Naive thymus-derived CD4-positive, alpha-beta T cell (primary cell): ENCODE measurements at regions of chr3 and their contacts with region 1.

Region 1: GRCh38 chr3:16808393-16809107 is 76.2 kb upstream of the PLCL2 start:
- DNase-seq: peak in 2 of 9 donors; percentile 8 to 16
- ATAC-seq: no peak
- H3K4me3 ChIP-seq: no peak overlapping the region
- H3K4me3 Mint-ChIP-seq: no peak overlapping the region
- H3K27ac ChIP-seq: no peak overlapping the region
- H3K27ac Mint-ChIP-seq: no peak overlapping the region
- H3K4me1 ChIP-seq: peaks cover 13 to 14% of the 10 kb centered on the region in 2 donors
- H3K4me1 Mint-ChIP-seq: peaks cover 8 to 36% (median 25%) of the 10 kb centered on the region in 7 donors
- H3K27me3 ChIP-seq: no peaks in the 10 kb centered on the region
- H3K27me3 Mint-ChIP-seq: peaks cover 0 to 43% (median 0%) of the 10 kb centered on the region in 5 donors

Region 2: DNA sequence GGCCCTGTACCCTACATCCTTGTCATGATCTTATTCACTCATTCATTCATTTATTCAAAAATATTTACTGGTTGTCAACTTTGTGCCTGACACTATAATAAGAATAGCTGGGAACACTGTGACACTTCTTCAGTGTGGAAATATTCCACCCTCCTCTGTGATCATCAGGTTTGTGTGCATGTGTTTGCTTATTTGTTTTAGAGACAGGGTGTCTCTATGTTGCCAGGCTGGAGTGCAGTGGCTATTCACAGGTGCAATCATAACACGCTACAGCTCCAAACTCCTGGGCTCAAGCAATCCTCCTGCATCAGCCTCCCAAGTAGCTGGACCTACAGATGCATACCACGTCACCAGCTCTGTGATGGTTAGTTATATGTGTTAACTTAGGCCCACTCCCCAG is 26.2 kb after region 1 on chr3:
- CTCF ChIA-PET with region 1: no interaction called
- POLR2A ChIA-PET with region 1: no interaction called
- intact Hi-C with region 1: no loop called
- DNase-seq: no peak
- ATAC-seq: no peak
- H3K4me3 ChIP-seq: no peak overlapping the region
- H3K4me3 Mint-ChIP-seq: no peak overlapping the region
- H3K27ac ChIP-seq: no peak overlapping the region
- H3K27ac Mint-ChIP-seq: peak overlapping the region in 2 of 9 donors; percentile 2 to 12
- H3K4me1 ChIP-seq: peaks cover 0 to 12% of the 10 kb centered on the region in 2 donors
- H3K4me1 Mint-ChIP-seq: peaks cover 10 to 41% (median 33%) of the 10 kb centered on the region in 7 donors
- H3K27me3 ChIP-seq: no peaks in the 10 kb centered on the region
- H3K27me3 Mint-ChIP-seq: peaks cover 0 to 2% (median 0%) of the 10 kb centered on the region in 5 donors

Region 3: DNA sequence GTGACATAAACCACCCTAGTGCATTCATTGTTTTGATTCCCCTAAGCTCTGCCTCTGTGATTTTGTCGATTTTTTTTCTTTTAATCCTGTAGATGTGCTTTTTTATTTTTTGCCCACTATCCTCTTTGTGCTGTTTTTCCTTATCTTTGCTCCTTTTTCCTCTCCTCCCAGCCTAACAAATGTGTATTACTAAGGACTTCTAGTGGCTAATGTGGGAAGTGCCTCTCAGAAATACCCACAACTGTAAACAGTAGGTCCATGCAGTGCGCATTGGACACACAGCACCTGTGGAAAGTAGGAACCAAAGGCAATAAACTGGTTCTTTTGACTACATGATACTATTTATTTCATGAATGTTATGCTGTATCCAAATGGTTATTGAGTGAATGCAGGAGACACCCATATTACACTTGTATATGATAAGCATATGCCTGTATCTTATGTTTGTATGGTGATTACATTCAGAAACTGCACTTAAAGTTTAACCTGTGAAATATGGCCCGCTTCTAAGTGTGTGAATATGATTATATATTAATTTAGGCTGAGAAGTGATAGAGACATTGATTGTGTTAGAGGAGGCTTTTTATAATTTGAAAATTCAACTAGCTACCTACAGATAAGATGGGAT is 224.0 kb after region 1 on chr3:
- CTCF ChIA-PET with region 1: interaction called, 3 read pairs
- POLR2A ChIA-PET with region 1: no interaction called
- intact Hi-C with region 1: loop called in 1 of 2 experiments (anchors 5 kb)
- DNase-seq: no peak
- ATAC-seq: no peak
- H3K4me3 ChIP-seq: no peak overlapping the region
- H3K4me3 Mint-ChIP-seq: peak overlapping the region in 1 of 10 donors; percentile 11
- H3K27ac ChIP-seq: no peak overlapping the region
- H3K27ac Mint-ChIP-seq: peak overlapping the region in 7 of 9 donors; percentile 4 to 60 (median 17)
- H3K4me1 ChIP-seq: peaks cover 0 to 24% of the 10 kb centered on the region in 2 donors
- H3K4me1 Mint-ChIP-seq: peaks cover 48 to 90% (median 80%) of the 10 kb centered on the region in 7 donors
- H3K27me3 ChIP-seq: no peaks in the 10 kb centered on the region
- H3K27me3 Mint-ChIP-seq: no peaks in the 10 kb centered on the region

Region 4: DNA sequence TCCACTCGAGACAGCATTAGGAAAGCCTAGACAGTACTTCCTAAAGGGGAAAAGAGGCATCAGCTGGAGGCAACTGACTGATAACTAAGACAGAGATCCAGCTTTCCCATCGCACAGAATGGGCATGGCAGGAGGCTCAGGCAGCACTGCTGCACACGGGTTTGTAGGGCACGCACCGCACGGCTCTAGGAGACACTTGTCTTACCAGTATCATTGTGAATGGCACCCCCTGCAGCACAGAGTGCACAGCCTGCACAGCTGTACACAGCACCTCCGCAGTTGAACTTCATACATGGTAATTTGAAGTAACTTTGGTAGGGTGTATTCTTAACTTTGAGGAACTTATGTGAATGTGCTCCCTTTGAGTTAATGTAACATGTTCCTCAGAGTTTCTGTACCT is 357.8 kb after region 1 on chr3:
- CTCF ChIA-PET with region 1: no interaction called
- POLR2A ChIA-PET with region 1: no interaction called
- intact Hi-C with region 1: loop called in 1 of 2 experiments (anchors 5 kb)
- DNase-seq: peak in 4 of 9 donors; percentile 7 to 22 (median 14)
- ATAC-seq: no peak
- H3K4me3 ChIP-seq: no peak overlapping the region
- H3K4me3 Mint-ChIP-seq: no peak overlapping the region
- H3K27ac ChIP-seq: no peak overlapping the region
- H3K27ac Mint-ChIP-seq: peak overlapping the region in 2 of 9 donors; percentile 41 to 65
- H3K4me1 ChIP-seq: no peaks in the 10 kb centered on the region
- H3K4me1 Mint-ChIP-seq: peaks cover 0 to 15% (median 0%) of the 10 kb centered on the region in 7 donors
- H3K27me3 ChIP-seq: no peaks in the 10 kb centered on the region
- H3K27me3 Mint-ChIP-seq: no peaks in the 10 kb centered on the region

Region 5: DNA sequence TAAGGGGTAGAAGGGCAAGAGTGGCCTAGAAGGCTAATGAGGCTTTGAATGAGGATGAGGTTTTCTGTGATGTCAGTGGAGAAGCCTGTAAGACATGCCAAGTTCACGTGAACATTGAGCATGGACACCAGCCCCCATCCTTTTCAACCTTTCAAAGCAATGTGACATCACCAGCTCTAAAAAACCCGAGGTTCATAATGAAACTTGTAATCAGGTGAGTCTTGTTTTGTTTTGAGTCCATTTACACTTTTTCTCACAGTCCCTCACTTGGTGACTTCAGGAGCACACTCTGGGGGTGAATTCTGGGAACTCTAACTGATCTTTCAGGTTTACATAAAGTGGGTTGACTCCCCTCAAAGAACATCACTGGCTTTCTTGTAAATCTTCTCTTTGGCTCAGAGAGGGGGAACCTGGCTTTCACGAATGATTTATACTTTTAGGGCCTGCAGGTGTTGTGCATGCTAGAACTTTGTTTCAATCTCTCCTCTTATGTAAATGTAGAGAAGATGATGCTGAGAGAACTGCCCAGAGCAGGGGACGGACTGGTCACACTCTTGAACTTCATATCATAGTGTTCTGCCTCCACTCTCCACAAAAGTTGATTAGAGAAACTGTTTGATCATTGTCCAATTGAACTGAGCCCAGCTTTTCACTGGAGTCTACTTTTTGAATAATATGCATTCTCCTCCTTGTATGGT is 1841.3 kb after region 1 on chr3:
- CTCF ChIA-PET with region 1: no interaction called
- POLR2A ChIA-PET with region 1: no interaction called
- intact Hi-C with region 1: no loop called
- DNase-seq: peak in 8 of 9 donors; percentile 21 to 53 (median 33)
- ATAC-seq: peak; percentile 41
- H3K4me3 ChIP-seq: no peak overlapping the region
- H3K4me3 Mint-ChIP-seq: peak overlapping the region in 8 of 10 donors; percentile 14 to 66 (median 28)
- H3K27ac ChIP-seq: no peak overlapping the region
- H3K27ac Mint-ChIP-seq: peak overlapping the region; percentile 17 to 89 (median 56)
- H3K4me1 ChIP-seq: peaks cover 0 to 12% of the 10 kb centered on the region in 2 donors
- H3K4me1 Mint-ChIP-seq: peaks cover 22 to 77% (median 30%) of the 10 kb centered on the region in 7 donors
- H3K27me3 ChIP-seq: no peaks in the 10 kb centered on the region
- H3K27me3 Mint-ChIP-seq: no peaks in the 10 kb centered on the region